Left lung (tissue), 14 donors: ENCODE measurements at regions of chr2 and their contacts with region 1.

Region 1: GRCh38 chr2:113965644-113966043 is 75.8 kb downstream of the ACTR3 start:
- DNase-seq: peak in 1 of 4 donors; percentile 21
- ATAC-seq: peak; percentile 73
- H3K4me3 ChIP-seq: no peak overlapping the region
- H3K27ac ChIP-seq: peak overlapping the region in 1 of 2 donors; percentile 64
- H3K4me1 ChIP-seq: peaks cover 6 to 38% of the 10 kb centered on the region in 2 donors
- H3K27me3 ChIP-seq: no peaks in the 10 kb centered on the region
- CTCF ChIP-seq: peak in 1 of 2 donors; percentile 17

Region 2: DNA sequence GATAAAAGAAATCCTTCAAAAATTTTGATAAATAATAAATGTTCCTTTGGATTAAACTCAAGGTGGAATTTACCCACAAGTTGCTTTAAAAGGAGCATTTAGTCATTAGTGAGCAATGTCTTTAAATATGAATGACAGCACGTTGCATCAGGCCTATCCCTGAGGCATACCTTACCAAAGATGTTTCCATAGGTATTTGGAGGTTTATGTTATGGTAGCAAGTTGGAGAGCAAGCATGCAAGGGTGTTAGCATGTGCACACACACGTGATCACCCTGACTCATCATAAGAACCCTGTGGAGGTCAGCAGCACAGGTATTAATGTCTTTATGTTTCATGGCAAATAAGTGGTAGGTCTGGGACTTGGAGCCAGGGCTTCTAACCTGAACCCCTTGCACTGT is 84.2 kb after region 1 on chr2:
- intact Hi-C with region 1: no loop called
- DNase-seq: no peak
- ATAC-seq: no peak
- H3K4me3 ChIP-seq: no peak overlapping the region
- H3K27ac ChIP-seq: no peak overlapping the region
- H3K4me1 ChIP-seq: no peaks in the 10 kb centered on the region
- H3K27me3 ChIP-seq: no peaks in the 10 kb centered on the region
- CTCF ChIP-seq: no peak

Region 3: DNA sequence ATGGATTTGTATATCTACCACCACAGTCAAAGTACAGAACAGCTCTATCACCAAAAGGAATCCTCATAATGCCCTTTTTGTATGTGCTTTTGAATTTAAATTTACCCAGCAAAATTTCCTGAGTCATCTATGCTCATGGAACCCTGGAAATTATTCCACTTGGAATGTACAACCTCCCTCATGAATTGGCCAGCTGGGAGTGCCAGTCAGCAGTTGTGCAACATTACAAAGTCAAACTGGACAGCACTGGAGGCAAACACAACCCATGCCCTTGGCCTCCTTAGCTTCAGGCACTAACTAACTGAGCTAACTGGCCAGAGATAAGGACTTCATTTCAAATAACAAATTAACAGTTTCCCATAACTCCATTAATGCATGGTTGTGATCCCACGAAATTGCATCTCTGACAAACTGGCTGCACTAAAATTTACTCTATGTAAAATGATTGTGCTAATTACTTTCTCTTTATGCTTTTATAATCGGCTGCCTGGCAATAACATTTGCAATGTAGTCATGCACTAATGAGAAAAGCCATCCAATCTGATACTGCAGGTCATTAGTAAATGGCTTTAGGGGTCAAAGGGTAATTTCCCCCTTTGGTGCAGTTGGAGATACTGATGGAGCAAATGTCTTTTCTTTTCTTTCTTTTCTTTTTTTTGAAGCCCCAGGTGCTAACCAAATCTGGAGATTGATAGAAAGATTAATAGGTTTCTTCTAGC is 194.8 kb after region 1 on chr2:
- intact Hi-C with region 1: no loop called
- DNase-seq: no peak
- ATAC-seq: peak; percentile 55
- H3K4me3 ChIP-seq: no peak overlapping the region
- H3K27ac ChIP-seq: no peak overlapping the region
- H3K4me1 ChIP-seq: no peaks in the 10 kb centered on the region
- H3K27me3 ChIP-seq: no peaks in the 10 kb centered on the region
- CTCF ChIP-seq: no peak

Region 4: DNA sequence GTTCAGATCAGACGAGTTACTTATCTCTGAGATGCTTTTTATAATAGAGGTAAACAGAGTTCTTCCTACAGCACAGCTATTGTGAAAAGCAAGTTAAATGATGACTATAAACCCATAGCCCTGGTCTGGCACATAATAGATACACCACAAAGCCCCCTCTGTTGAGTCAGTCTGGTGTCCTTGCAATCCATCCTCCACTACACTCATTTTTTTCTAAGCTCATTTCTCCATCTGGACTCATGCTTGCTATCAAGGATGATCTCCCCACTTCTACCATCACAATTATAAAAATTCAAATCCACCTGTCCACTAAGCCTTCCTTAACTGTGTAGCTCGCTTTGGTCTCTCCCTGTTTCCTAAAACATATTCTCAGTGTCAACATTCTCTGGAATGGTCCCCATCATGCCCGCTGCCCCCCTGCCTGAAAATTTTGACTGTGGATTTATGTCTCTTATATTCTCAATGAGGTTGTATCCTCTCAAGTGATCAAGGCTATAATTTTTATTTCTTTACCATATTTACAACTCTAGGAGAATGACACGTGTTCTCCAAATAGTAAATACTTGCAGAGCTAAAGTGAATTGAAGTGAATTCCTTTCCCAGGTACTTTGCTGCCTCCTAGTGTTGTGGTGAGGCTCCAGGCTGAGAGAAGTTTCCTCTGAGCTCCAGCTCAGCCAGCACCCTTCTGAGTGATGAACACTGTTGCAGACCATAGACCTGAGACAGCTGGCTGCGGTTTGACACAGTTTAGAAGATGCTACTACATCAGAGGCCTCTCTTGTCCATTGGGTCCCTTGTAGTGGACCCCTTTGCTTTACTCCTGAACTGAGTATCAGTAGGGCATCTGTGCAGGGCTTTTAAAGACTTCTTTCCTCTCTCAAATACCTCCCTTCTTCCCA is 585.5 kb after region 1 on chr2:
- intact Hi-C with region 1: loop called in 1 of 2 experiments (anchors 10 kb)
- DNase-seq: peak in 3 of 4 donors; percentile 37 to 74 (median 55)
- ATAC-seq: peak; percentile 91
- H3K4me3 ChIP-seq: no peak overlapping the region
- H3K27ac ChIP-seq: no peak overlapping the region
- H3K4me1 ChIP-seq: no peaks in the 10 kb centered on the region
- H3K27me3 ChIP-seq: no peaks in the 10 kb centered on the region
- CTCF ChIP-seq: peak; percentile 44 to 62